ENCODE measurements at regions of chr5 and their contacts with region 1.

Region 1: GRCh38 chr5:139787568-139788293 is 7.9 kb upstream of the PSD2 start:
- DNase-seq: peak; percentile 94
- ATAC-seq: peak; percentile 81
- H3K4me3 Mint-ChIP-seq: peak overlapping the region; percentile 91
- H3K27ac Mint-ChIP-seq: no peak overlapping the region
- H3K4me1 Mint-ChIP-seq: peaks cover 4% of the 10 kb centered on the region
- H3K27me3 Mint-ChIP-seq: peaks cover 66% of the 10 kb centered on the region
- CTCF ChIP-seq: peak; percentile 98

Region 2: GRCh38 chr5:139806726-139807646 is 19.3 kb after region 1 on chr5:
- CTCF ChIA-PET with region 1: interaction called, 14 read pairs
- POLR2A ChIA-PET with region 1: no interaction called
- DNase-seq: no peak
- ATAC-seq: no peak
- H3K4me3 Mint-ChIP-seq: no peak overlapping the region
- H3K27ac Mint-ChIP-seq: no peak overlapping the region
- H3K4me1 Mint-ChIP-seq: no peaks in the 10 kb centered on the region
- H3K27me3 Mint-ChIP-seq: peaks cover 8% of the 10 kb centered on the region
- CTCF ChIP-seq: no peak

Region 3: GRCh38 chr5:139844472-139845145 is 56.9 kb after region 1 on chr5:
- CTCF ChIA-PET with region 1: interaction called, 155 read pairs
- POLR2A ChIA-PET with region 1: no interaction called
- DNase-seq: peak; percentile 94
- ATAC-seq: peak; percentile 86
- H3K4me3 Mint-ChIP-seq: no peak overlapping the region
- H3K27ac Mint-ChIP-seq: no peak overlapping the region
- H3K4me1 Mint-ChIP-seq: peaks cover 9% of the 10 kb centered on the region
- H3K27me3 Mint-ChIP-seq: peaks cover 51% of the 10 kb centered on the region
- CTCF ChIP-seq: peak; percentile 58

Region 4: DNA sequence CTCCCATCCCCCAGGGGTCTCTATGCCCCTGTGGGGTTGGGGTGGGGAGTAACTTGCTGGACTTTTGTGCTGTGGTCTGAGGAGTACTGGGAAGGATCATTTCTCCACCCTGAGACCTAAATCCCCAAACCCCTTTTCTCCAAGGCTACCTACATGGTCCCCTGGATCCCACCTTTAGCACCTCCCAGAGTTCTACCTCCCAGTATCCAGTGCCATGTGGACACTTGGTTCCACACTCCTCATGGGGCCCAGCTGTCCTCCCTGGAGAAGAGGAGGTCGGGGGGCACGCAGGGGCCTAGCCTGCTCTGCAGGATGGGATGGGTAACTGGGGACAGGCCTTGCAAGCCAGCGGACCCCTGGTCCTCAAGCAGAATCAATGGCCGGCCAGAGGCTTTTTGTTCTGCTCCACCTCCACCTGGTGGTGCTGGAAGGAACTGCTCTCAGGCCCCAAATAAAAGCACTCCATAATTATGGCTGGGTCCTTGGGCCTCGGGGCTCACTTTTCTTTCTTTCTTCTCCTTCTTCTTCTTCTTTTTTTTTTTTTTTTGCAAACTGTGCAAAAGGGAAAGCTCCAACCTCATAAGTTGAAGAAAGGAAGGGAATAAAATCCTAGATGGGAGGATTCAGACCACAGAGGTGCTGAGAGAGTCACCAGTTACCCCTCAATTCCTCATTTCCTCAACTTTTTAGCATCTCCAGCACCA is 76.3 kb after region 1 on chr5:
- CTCF ChIA-PET with region 1: interaction called, 79 read pairs
- POLR2A ChIA-PET with region 1: no interaction called
- DNase-seq: peak; percentile 81
- ATAC-seq: peak; percentile 84
- H3K4me3 Mint-ChIP-seq: no peak overlapping the region
- H3K27ac Mint-ChIP-seq: no peak overlapping the region
- H3K4me1 Mint-ChIP-seq: peaks cover 12% of the 10 kb centered on the region
- H3K27me3 Mint-ChIP-seq: peaks cover 6% of the 10 kb centered on the region
- CTCF ChIP-seq: peak; percentile 89

Region 5: DNA sequence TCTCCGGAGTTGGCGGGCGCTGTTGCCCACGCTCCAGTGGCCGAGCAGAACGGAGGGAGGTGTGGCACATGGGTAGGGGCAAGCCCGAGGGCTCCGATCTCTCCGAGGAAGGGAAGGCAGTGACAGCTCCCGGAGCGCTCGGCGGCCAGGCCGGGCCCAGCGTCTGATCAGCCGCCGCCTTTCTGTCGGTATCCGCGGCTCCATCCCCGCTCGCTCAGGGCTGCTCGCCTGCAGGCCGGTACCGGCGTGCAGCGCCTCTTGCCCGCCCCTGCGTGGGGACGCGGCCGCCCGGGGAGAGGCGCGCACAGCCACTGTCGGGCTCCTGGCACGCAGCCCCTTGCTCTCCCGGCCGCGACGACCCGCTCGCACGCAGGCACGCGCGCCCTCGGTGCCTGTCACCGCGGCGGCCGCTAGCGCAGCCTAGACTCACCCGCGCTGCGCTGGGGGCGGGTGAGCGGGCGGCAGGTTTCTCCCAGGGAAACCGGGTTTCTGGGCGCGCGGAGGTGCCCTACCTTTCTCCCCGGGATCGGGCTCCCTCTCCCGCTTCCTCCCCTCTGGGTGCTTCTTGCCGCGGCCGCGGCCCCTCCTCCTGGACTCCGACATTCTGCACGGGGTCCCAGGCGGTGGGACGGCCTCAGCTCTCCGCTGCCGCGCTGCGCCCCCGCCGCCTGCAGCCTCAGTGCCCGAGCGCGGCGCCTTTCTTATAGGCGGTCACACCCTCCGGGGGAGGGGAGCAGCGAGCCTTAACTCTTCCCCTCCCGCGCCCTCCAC is 116.2 kb after region 1 on chr5:
- CTCF ChIA-PET with region 1: interaction called, 20 read pairs
- POLR2A ChIA-PET with region 1: no interaction called
- DNase-seq: peak; percentile 67
- ATAC-seq: peak; percentile 50
- H3K4me3 Mint-ChIP-seq: peak overlapping the region; percentile 71
- H3K27ac Mint-ChIP-seq: no peak overlapping the region
- H3K4me1 Mint-ChIP-seq: peaks cover 12% of the 10 kb centered on the region
- H3K27me3 Mint-ChIP-seq: peaks cover 49% of the 10 kb centered on the region
- CTCF ChIP-seq: no peak

Region 6: DNA sequence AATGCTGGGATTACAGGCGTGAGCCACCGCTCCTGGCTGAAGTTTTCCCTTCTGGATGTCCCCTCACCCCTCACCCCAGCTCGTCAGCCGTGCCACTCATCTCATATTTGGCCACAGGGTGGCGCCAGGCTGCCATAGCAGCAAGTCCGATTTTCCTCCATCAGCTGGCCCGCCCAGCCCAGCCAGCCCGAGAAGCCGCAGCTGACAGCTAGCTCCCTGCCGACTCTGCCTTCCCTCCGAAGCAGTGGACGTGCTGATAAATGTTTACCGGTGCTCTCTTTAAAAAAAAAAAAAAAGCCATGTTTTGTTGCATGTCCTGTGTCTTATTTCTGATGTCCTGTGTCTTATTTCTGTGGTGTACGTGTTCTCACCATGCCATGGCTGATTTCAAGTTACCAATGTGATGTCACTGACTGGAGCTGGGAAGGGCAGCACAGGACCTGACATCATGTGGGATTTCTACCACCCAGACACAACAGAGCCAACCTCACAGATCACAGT is 456.8 kb after region 1 on chr5:
- CTCF ChIA-PET with region 1: no interaction called
- POLR2A ChIA-PET with region 1: no interaction called
- DNase-seq: peak; percentile 98
- ATAC-seq: peak; percentile 49
- H3K4me3 Mint-ChIP-seq: no peak overlapping the region
- H3K27ac Mint-ChIP-seq: 0 out of 2 replicates have a peak overlapping the region, but pooled peaks have one; percentile 5
- H3K4me1 Mint-ChIP-seq: peaks cover 43% of the 10 kb centered on the region
- H3K27me3 Mint-ChIP-seq: no peaks in the 10 kb centered on the region
- CTCF ChIP-seq: peak; percentile 81

Measured in WTC11 (cell line).